ENCODE measurements at regions of chr9 and their contacts with region 1.

Region 1: GRCh38 chr9:75001719-75002422 is 26.2 kb downstream of the CARNMT1 start:
- H3K4me3 Mint-ChIP-seq: no peak overlapping the region
- H3K27ac Mint-ChIP-seq: no peak overlapping the region
- H3K4me1 Mint-ChIP-seq: no peaks in the 10 kb centered on the region
- H3K27me3 Mint-ChIP-seq: no peaks in the 10 kb centered on the region

Region 2: DNA sequence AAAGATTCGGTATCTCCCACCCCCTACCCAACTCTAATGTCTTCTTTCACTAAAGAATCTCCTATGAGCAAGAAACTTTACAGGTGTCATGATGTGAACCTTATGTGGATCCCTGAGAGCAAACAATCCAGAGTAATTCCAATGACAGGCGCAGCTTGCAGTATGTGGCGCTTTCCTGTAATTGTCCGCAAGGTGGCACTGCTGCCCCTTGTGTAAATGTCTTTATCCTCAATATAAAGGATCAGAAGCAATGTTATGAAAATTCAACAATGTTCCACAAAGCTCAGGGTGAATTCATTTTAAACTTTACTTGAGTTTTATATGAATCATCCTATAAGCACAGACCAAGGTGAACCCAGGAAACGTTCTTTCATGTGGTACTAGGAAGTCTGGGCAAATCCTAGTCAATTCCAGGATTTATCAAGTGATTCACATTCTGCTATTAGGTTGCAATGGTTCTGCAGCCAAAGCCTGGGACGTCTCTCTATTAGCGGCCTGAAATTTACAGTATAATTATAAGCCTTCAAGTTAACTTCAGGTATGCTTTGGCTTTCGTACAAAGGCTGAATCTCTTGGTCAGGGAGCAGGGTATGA is 227.9 kb before region 1 on chr9:
- intact Hi-C with region 1: loop called (anchors 1 kb)
- H3K4me3 Mint-ChIP-seq: no peak overlapping the region
- H3K27ac Mint-ChIP-seq: no peak overlapping the region
- H3K4me1 Mint-ChIP-seq: peaks cover 9% of the 10 kb centered on the region
- H3K27me3 Mint-ChIP-seq: peaks cover 8% of the 10 kb centered on the region

Region 3: DNA sequence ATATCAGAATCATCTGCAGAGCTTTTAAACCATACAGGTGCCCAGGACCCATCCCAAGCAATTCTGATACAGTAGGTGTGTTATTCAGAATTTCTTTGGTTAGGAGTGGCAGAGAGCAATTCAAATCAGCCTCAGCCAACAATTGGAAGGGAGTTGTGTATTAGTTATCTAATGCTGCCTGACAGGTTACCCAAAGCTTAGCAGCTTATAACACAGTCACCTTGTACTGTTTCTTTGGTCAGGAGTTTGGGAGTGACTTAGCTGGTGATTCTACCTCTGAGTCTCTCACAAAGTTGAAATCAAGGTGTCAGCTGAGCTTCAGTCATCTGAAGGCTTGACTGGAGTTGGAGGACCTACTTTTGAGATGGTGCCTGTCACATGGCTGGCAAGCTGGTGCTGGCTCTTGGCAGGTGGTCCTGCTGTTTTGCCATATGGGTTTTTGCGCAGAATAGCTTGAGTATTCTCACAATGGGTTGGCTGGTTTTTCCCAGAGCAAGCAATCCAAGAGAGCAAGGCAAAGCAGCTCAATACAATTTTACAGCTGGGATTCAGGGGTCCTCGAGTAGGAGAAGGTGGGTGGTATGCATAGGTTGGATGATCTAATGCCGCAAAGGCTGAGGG is 45.0 kb after region 1 on chr9:
- intact Hi-C with region 1: no loop called
- H3K4me3 Mint-ChIP-seq: no peak overlapping the region
- H3K27ac Mint-ChIP-seq: no peak overlapping the region
- H3K4me1 Mint-ChIP-seq: no peaks in the 10 kb centered on the region
- H3K27me3 Mint-ChIP-seq: no peaks in the 10 kb centered on the region

Region 4: GRCh38 chr9:75071530-75072124 is 69.8 kb after region 1 on chr9:
- intact Hi-C with region 1: loop called (anchors 5 kb)
- H3K4me3 Mint-ChIP-seq: no peak overlapping the region
- H3K27ac Mint-ChIP-seq: no peak overlapping the region
- H3K4me1 Mint-ChIP-seq: no peaks in the 10 kb centered on the region
- H3K27me3 Mint-ChIP-seq: no peaks in the 10 kb centered on the region

Measured in dendritic cell treated with granulocyte-macrophage colony-stimulating factor and Interleukin-4, amounts not matched to agents 40 ng/mL and 50 ng/mL, for 4 days (primary cell).